ENCODE measurements at regions of chr16 and their contacts with region 1.

Region 1: GRCh38 chr16:25235991-25236390 is 19.2 kb downstream of the AQP8 start:
- DNase-seq: no peak
- H3K4me3 ChIP-seq: no peak overlapping the region
- H3K4me3 Mint-ChIP-seq: no peak overlapping the region
- H3K27ac ChIP-seq: no peak overlapping the region
- H3K27ac Mint-ChIP-seq: no peak overlapping the region
- H3K4me1 ChIP-seq: no peaks in the 10 kb centered on the region
- H3K4me1 Mint-ChIP-seq: peaks cover 0 to 6% (median 3%) of the 10 kb centered on the region in 4 donors
- H3K27me3 ChIP-seq: no peaks in the 10 kb centered on the region
- H3K27me3 Mint-ChIP-seq: no peaks in the 10 kb centered on the region

Region 2: DNA sequence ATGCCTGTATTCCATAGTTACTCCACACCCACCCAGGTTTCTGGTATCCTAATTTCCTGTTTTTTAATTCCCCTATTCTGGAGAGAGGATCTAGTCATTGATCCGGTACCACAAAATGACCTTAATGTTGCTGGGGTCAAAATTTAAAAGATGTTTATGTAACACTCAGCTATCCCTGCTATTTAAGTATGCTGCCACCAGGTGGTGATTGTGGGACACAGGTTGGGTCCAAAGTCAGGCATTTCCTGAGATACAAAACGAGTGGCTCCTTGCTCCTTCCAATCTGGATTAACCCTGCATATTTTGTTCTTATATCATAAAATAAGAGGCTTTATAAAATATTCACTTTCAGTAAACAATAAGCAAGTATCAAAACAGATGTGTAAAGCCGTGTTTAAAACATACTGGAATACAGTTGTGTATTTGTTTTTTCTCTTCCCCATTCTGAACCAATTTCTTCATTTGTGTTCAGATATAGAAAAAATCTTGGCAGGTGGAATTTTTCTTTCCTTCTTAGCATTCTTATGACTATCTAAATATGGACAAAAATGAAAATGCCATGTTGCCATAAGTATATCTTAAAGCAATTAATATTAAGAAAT is 472.1 kb after region 1 on chr16:
- CTCF ChIA-PET with region 1: interaction called, 3 read pairs
- POLR2A ChIA-PET with region 1: no interaction called
- intact Hi-C with region 1: loop called (anchors 5 kb)
- DNase-seq: no peak
- H3K4me3 ChIP-seq: no peak overlapping the region
- H3K4me3 Mint-ChIP-seq: no peak overlapping the region
- H3K27ac ChIP-seq: no peak overlapping the region
- H3K27ac Mint-ChIP-seq: no peak overlapping the region
- H3K4me1 ChIP-seq: no peaks in the 10 kb centered on the region
- H3K4me1 Mint-ChIP-seq: no peaks in the 10 kb centered on the region
- H3K27me3 ChIP-seq: no peaks in the 10 kb centered on the region
- H3K27me3 Mint-ChIP-seq: peaks cover 6 to 7% of the 10 kb centered on the region in 2 donors

Region 3: DNA sequence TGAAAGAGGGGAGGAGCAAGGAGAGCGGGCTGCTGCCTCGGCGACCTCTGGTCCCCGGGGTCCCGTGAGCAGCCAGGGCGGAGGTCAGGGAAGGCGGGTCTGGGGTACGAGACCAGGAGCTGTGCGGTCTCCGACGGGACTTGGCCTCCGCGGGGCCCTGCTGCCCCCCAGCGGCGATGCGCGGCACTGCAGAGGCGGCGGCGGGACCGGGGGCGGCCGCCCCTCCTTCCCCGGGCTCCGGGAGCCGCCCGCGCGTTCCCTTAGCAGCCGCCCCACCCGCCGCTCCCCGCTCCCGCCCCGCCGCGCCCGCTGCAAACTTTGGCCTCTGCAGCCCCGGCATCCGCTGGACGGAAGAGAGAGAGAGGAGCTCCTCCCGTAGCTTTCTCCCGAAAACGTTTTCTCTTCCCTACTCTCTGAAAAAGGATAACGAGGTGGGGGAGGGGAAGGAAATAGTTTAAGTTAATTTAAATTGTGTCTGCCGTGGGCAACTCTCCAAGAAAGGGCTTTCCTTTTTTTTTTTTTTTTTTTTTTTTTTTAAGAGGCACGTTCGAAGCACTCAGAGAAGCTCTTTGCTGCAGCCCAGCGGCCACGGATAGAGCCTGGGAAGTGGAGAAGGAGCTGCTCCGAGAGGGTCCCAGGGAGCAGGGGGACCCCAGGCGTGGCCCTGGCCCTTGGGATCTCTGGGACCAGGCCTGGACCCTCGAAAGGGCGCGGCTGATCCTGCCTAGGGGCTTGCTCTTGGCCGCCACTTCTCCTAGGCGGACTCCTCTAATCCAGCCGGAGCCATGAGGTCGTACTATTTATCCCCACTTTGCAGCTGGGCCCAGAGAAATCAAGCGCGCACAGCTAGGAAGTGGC is 1873.9 kb after region 1 on chr16:
- CTCF ChIA-PET with region 1: no interaction called
- POLR2A ChIA-PET with region 1: no interaction called
- intact Hi-C with region 1: loop called (anchors 10 kb)
- DNase-seq: peak; percentile 64 to 78 (median 72)
- H3K4me3 ChIP-seq: no peak overlapping the region
- H3K4me3 Mint-ChIP-seq: peak overlapping the region in 7 of 8 donors; percentile 31 to 79 (median 72)
- H3K27ac ChIP-seq: no peak overlapping the region
- H3K27ac Mint-ChIP-seq: peak overlapping the region in 6 of 7 donors; percentile 9 to 65 (median 54)
- H3K4me1 ChIP-seq: peaks cover 7% of the 10 kb centered on the region
- H3K4me1 Mint-ChIP-seq: peaks cover 2 to 11% (median 6%) of the 10 kb centered on the region in 4 donors
- H3K27me3 ChIP-seq: no peaks in the 10 kb centered on the region
- H3K27me3 Mint-ChIP-seq: peaks cover under 1 to 1% of the 10 kb centered on the region in 2 donors